T-cell (primary cell): ENCODE measurements at regions of chr16 and their contacts with region 1.

Region 1: DNA sequence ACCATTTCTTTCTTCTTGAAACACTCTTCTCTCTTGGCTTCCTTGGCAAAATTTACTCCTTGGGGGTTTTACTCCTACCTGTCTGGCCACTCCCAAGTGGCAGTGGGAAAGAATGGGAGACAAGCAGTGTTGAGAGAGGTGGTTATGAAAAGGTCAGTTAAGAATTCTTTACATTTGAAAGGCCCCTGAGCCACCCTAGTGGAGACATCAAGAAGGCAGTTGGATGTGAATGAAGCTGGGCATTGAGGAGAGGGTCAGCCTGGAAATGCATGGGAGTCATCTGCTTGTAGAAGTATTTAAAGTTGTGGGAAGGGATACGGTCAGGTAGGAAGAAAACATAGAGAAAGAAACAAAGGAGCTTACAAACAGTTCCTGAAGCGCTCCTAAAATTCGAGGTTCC is 42.3 kb upstream of the CCNF start:
- DNase-seq: no peak
- ATAC-seq: no peak
- H3K4me3 ChIP-seq: no peak overlapping the region
- H3K4me3 Mint-ChIP-seq: no peak overlapping the region
- H3K27ac ChIP-seq: no peak overlapping the region
- H3K27ac Mint-ChIP-seq: no peak overlapping the region
- H3K4me1 ChIP-seq: no peaks in the 10 kb centered on the region
- H3K4me1 Mint-ChIP-seq: no peaks in the 10 kb centered on the region
- H3K27me3 ChIP-seq: peaks cover 0 to 13% of the 10 kb centered on the region in 2 experiments
- H3K27me3 Mint-ChIP-seq: peaks cover 6 to 15% of the 10 kb centered on the region in 2 donors

Region 2: DNA sequence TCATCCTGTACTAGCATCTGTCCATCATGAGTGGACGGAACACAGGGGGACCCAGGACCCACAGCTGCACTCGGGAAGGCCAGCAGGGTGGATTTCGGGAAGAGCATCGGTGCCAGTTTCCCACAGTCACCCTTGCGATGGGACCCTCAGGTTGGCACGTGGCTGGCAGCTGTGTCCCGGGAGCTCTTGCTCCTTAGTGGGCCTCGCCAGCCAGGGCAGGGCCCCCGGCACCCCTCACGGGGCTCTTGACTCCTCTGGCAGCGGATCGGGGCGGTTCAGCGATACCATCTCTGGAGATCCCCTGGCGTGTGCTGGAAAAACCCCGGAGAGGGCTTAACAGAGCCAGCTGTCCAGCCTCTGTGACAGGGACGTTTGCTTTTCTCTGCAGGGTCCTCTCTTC is 1850.2 kb before region 1 on chr16:
- CTCF ChIA-PET with region 1: no interaction called
- POLR2A ChIA-PET with region 1: interaction called in 1 of 2 experiments, 14 read pairs
- DNase-seq: no peak
- ATAC-seq: no peak
- H3K4me3 ChIP-seq: no peak overlapping the region
- H3K4me3 Mint-ChIP-seq: no peak overlapping the region
- H3K27ac ChIP-seq: no peak overlapping the region
- H3K27ac Mint-ChIP-seq: no peak overlapping the region
- H3K4me1 ChIP-seq: peaks cover 0 to 4% of the 10 kb centered on the region in 2 experiments
- H3K4me1 Mint-ChIP-seq: peaks cover 0 to 4% (median 2%) of the 10 kb centered on the region in 3 donors
- H3K27me3 ChIP-seq: no peaks in the 10 kb centered on the region
- H3K27me3 Mint-ChIP-seq: no peaks in the 10 kb centered on the region